ENCODE measurements at regions of chr2 and their contacts with region 1.

Region 1: DNA sequence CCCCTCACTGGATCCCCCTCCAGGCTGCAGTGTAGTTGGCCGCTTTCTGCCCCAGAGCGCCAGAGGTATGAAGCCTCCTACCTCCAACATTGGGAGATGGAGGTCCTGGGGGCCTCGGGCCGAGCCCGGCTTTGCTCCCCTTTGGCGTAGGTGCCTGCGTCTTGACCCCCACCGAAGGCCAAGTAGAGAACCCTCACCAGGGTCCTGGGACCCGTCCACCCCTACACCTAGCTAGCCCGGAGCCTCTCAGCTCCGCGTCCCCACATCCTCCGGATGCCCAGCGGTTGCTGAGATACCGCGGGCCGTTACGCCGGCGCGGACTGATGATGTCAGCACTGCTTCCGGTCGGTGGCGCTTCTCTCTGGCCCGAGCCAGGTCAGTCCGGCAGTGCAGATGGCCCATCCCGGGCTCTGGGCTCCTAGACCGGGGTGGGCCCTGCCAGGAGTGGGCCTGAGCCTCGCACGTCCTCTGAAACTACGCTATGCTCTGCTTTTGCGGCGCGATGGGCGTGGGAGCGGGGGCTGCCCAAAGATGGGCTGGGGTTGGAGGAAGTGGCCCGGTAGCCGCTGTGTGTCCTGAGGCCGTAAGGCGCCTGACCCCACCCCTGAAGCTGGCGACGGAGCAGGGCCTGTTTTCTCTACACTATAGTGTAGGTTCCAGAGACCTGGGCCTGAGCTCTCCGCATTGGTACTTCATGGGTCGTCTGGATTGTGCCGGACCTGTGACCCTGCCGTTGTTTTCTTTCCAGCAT is at the starts of genes GLB1L and STK16:
- DNase-seq: peak; percentile 73 to 93 (median 84)
- ATAC-seq: peak; percentile 44
- H3K4me3 ChIP-seq: peak within 1 kb of the TSS; percentile 99
- H3K4me3 Mint-ChIP-seq: peak within 1 kb of the TSS; percentile 88
- H3K27ac ChIP-seq: peak within 1 kb of the TSS; percentile 95 to 98
- H3K27ac Mint-ChIP-seq: peak within 1 kb of the TSS; percentile 96
- H3K4me1 ChIP-seq: peaks cover 62% of the 10 kb centered on the region
- H3K4me1 Mint-ChIP-seq: peaks cover 74% of the 10 kb centered on the region
- H3K27me3 ChIP-seq: no peaks in the 10 kb centered on the region
- H3K27me3 Mint-ChIP-seq: no peaks in the 10 kb centered on the region
- CTCF ChIP-seq: no peak
- total RNA-seq, gene GLB1L: 2.4 to 3.0 TPM
- total RNA-seq, gene STK16: 11.2 to 14.1 TPM

Region 2: DNA sequence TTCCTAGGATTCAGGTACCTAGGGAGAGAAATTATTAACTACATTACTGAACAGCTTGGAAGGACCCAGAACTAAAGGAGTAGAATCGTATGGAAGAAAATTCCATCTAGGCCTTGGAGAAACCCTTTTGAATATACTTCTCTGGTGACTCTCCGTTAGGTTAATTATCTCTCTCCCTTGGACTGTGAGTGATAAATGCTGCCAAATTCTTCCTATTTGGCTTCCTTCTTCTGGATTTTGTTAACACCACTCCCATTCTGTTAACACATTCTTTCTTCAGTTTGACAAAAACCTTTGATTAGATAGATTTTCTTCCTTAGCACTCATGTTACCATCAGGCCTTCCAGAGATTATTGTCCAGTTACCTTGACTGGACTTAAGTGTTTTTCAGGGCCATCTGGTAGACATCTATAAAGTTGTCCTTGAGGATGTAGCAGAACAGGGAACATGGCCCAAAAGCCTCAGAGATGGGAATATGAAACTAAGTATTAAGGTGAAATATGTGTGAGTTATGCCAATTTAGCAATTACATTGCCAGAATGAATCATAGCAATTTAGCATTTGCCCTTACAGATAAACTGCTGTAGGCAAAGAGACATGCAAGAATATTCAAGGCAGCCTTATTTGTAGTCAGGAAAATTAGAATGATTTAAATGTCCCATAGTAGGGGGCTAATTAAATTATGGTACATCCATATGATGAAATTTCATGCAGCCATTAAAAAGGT is 456.6 kb before region 1 on chr2:
- CTCF ChIA-PET with region 1: no interaction called
- POLR2A ChIA-PET with region 1: no interaction called
- intact Hi-C with region 1: no loop called
- DNase-seq: no peak
- ATAC-seq: no peak
- H3K4me3 ChIP-seq: no peak overlapping the region
- H3K4me3 Mint-ChIP-seq: no peak overlapping the region
- H3K27ac ChIP-seq: no peak overlapping the region
- H3K27ac Mint-ChIP-seq: no peak overlapping the region
- H3K4me1 ChIP-seq: no peaks in the 10 kb centered on the region
- H3K4me1 Mint-ChIP-seq: no peaks in the 10 kb centered on the region
- H3K27me3 ChIP-seq: peaks cover 0 to 11% of the 10 kb centered on the region in 2 experiments
- H3K27me3 Mint-ChIP-seq: peaks cover 53% of the 10 kb centered on the region
- CTCF ChIP-seq: no peak

Region 3: GRCh38 chr2:219218732-219219701 is 26.3 kb before region 1 on chr2 and contains the start of gene ABCB6:
- CTCF ChIA-PET with region 1: interaction called, 4 read pairs
- POLR2A ChIA-PET with region 1: interaction called, 25 read pairs
- intact Hi-C with region 1: loop called (anchors 5 kb)
- DNase-seq: peak; percentile 67 to 93 (median 86)
- ATAC-seq: peak; percentile 92
- H3K4me3 ChIP-seq: peak within 1 kb of the TSS; percentile 70
- H3K4me3 Mint-ChIP-seq: peak within 1 kb of the TSS; percentile 85
- H3K27ac ChIP-seq: peak within 1 kb of the TSS in 1 of 2 donors; percentile 56
- H3K27ac Mint-ChIP-seq: peak within 1 kb of the TSS; percentile 78
- H3K4me1 ChIP-seq: peaks cover 26% of the 10 kb centered on the region
- H3K4me1 Mint-ChIP-seq: peaks cover 21% of the 10 kb centered on the region
- H3K27me3 ChIP-seq: no peaks in the 10 kb centered on the region
- H3K27me3 Mint-ChIP-seq: no peaks in the 10 kb centered on the region
- CTCF ChIP-seq: no peak
- total RNA-seq, gene ABCB6: 2.6 to 3.1 TPM

Region 4: DNA sequence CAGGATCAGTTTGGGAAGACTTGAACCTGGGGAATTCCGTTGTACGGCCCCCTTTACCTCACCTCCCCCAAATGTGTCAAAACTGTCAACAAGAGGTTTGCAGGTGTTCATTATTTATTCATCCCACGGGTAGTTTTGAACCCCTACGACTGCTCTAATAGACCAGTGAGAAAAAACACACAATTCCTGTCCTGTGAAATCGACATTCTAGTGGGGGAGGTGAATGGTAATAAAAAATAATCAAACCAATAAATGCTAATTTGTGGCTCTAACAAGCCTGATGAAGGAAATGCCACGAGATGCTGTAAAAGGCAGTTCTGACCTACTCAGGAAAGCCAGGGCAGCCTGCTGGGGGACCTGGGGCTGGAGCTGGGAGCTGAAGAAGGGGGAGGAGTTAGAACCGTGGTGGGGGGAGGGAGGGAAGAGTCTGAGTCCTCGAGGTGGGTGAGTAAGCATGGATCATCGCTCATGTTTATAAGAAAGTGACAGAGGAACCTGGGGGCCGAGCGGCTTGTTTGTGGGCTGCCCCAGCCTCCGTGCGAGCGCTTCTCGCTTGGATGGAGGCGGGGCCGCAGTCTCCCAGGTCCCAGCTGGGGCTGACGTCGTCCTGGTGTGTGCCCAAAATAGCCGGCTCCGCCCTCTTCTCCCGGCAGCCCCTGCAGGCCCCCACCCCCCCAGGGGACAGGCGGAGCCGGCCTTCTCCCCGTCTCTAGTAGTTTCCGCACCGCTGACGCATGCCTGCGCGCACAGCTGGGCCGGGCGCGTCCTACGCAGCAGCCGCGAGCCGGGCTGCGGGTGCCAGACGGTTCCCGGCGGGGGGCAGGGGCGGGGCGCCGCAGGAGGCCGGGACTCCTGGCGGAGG is 33.6 kb after region 1 on chr2 and contains the start of gene DNAJB2:
- CTCF ChIA-PET with region 1: interaction called, 7 read pairs
- POLR2A ChIA-PET with region 1: interaction called, 202 read pairs
- intact Hi-C with region 1: no loop called
- DNase-seq: peak; percentile 96 to 100 (median 98)
- ATAC-seq: peak; percentile 76
- H3K4me3 ChIP-seq: peak within 1 kb of the TSS; percentile 66
- H3K4me3 Mint-ChIP-seq: peak within 1 kb of the TSS; percentile 97
- H3K27ac ChIP-seq: peak within 1 kb of the TSS; percentile 95 to 97
- H3K27ac Mint-ChIP-seq: peak within 1 kb of the TSS; percentile 98
- H3K4me1 ChIP-seq: peaks cover 43% of the 10 kb centered on the region
- H3K4me1 Mint-ChIP-seq: peaks cover 43% of the 10 kb centered on the region
- H3K27me3 ChIP-seq: no peaks in the 10 kb centered on the region
- H3K27me3 Mint-ChIP-seq: no peaks in the 10 kb centered on the region
- CTCF ChIP-seq: no peak
- total RNA-seq, gene DNAJB2: 151 to 161 TPM

Measured in CD4-positive, alpha-beta T cell (primary cell).